ENCODE measurements at regions of chr5 and their contacts with region 1.

Region 1: DNA sequence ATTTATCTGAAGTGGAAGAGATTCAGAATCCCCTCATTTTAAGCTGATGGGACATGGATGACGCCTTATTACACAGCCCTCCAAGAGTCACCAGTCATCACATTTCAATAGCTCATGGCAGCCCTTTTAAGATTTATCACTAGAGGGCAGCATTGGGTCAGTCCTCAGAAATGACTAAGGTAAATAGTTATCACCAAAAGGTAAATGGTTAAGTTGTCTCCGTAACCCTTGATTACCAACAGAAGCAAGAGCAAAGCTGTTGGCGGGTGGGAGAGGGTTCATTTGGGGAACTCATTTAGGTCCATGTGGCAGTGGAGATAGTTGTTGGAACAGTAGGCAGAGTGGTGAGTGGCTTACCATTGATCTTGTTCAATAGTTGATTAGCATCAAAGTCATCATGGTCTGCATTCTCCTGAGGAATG is 12.0 kb upstream of the C9 start:
- DNase-seq: peak; percentile 72
- H3K4me3 ChIP-seq: no peak overlapping the region
- H3K27ac ChIP-seq: no peak overlapping the region
- H3K4me1 ChIP-seq: no peaks in the 10 kb centered on the region
- H3K27me3 ChIP-seq: no peaks in the 10 kb centered on the region
- CTCF ChIP-seq: peak; percentile 57 to 71
- POLR2A ChIP-seq: no peak

Region 2: GRCh38 chr5:38765399-38765861 is 610.9 kb before region 1 on chr5:
- CTCF ChIA-PET with region 1: no interaction called
- POLR2A ChIA-PET with region 1: no interaction called
- dilution Hi-C with region 1: no loop called
- intact Hi-C with region 1: no loop called
- DNase-seq: no peak
- H3K4me3 ChIP-seq: no peak overlapping the region
- H3K27ac ChIP-seq: no peak overlapping the region
- H3K4me1 ChIP-seq: no peaks in the 10 kb centered on the region
- H3K27me3 ChIP-seq: peaks cover 4 to 5% of the 10 kb centered on the region in 2 experiments
- CTCF ChIP-seq: no peak
- POLR2A ChIP-seq: no peak

Region 3: DNA sequence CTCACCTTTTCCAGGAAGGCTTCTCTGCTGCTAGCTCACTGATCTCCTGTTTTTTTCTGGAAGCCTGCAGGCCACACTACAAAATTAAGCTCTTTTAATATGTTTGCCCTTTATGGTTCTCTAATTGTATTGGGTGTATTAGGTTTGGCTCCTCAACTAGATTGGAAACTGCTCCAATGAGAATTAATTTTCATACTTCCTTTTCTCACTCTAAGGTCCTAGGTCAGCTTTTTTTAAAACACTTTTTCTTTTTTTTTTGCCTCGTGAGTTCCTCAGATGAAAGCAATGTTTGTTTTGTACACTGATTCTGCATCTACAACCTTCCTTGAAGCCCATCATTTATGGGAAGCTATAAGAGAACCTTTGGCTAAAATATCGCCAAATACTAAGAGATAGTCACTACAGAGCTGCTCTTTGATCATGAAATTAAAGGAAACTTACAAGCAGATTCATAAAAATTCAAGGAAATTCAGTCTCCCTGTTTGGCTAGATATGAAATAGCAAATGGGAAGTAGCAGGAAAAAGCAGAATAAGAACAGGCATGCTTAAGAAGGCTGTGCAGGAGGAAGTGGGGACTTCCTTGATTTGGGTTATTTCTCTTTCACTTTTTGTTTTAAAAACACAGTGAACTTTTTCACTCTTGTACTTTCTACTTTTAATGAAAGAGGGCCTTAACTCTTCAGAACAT is 101.8 kb before region 1 on chr5:
- CTCF ChIA-PET with region 1: no interaction called
- POLR2A ChIA-PET with region 1: no interaction called
- dilution Hi-C with region 1: no loop called
- intact Hi-C with region 1: no loop called
- DNase-seq: peak; percentile 67
- H3K4me3 ChIP-seq: peak overlapping the region in 2 of 3 experiments; percentile 13 to 57
- H3K27ac ChIP-seq: no peak overlapping the region
- H3K4me1 ChIP-seq: peaks cover 9% of the 10 kb centered on the region
- H3K27me3 ChIP-seq: no peaks in the 10 kb centered on the region
- CTCF ChIP-seq: no peak
- POLR2A ChIP-seq: no peak

Region 4: DNA sequence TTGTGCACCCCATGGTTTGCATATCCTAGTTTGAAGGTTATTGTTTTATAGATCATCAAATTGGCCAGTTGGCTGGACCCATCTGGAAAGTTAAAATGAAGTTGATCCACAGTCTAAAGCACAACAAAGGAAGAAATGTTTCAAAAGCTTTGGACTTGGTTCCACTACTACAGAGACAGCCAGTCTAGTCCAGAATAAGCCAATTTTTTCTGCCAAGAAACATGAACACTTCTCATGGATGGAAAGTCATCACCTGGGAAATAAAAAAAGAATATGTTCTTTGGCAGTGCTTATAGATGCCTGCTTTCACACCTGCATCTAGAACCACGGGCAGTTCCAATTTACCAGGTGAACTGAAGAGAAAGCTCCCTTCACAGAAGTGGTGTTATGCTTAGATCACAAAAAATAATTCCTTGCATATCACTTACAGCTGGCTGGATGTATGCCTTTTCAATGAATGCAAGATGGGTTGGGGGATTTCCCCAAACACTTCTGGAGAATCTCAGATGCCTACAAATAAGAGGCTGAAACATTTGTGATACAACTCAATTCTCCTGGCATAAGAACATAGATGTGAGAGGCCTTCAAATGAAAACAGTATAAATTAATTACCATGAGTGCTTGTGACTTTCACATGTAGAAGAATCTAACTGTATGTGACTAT is 38.9 kb before region 1 on chr5:
- CTCF ChIA-PET with region 1: no interaction called
- POLR2A ChIA-PET with region 1: no interaction called
- dilution Hi-C with region 1: no loop called
- intact Hi-C with region 1: no loop called
- DNase-seq: no peak
- H3K4me3 ChIP-seq: no peak overlapping the region
- H3K27ac ChIP-seq: no peak overlapping the region
- H3K4me1 ChIP-seq: no peaks in the 10 kb centered on the region
- H3K27me3 ChIP-seq: no peaks in the 10 kb centered on the region
- CTCF ChIP-seq: no peak
- POLR2A ChIP-seq: no peak

Region 5: DNA sequence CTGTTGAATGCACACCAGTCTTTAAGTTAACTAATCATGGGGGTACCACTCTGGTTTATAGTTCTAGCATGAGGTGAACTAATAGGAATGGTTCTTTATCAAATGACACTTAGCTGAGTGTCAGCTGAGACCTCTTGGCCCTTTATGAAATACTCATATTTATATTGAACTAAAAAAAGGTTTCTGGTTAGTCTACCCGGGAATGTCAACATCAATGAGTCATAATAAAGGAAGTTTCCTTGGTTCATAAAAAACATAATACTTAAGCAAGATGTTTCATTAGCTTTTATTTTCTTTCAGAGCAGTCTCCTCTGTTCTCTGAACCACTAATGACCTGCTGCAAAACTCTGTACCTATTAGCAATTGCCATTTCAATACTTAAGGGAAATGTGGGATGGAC is 34.7 kb after region 1 on chr5:
- CTCF ChIA-PET with region 1: interaction called, 11 read pairs
- POLR2A ChIA-PET with region 1: no interaction called
- dilution Hi-C with region 1: no loop called
- intact Hi-C with region 1: no loop called
- DNase-seq: peak; percentile 89
- H3K4me3 ChIP-seq: peak overlapping the region in 1 of 3 experiments; percentile 23
- H3K27ac ChIP-seq: peak overlapping the region; percentile 47
- H3K4me1 ChIP-seq: peaks cover 43% of the 10 kb centered on the region
- H3K27me3 ChIP-seq: no peaks in the 10 kb centered on the region
- CTCF ChIP-seq: no peak
- POLR2A ChIP-seq: no peak

Region 6: GRCh38 chr5:39501397-39501796 is 125.1 kb after region 1 on chr5:
- CTCF ChIA-PET with region 1: interaction called, 12 read pairs
- POLR2A ChIA-PET with region 1: no interaction called
- dilution Hi-C with region 1: no loop called
- intact Hi-C with region 1: no loop called
- DNase-seq: peak; percentile 83
- H3K4me3 ChIP-seq: no peak overlapping the region
- H3K27ac ChIP-seq: peak overlapping the region; percentile 64
- H3K4me1 ChIP-seq: peaks cover 26% of the 10 kb centered on the region
- H3K27me3 ChIP-seq: no peaks in the 10 kb centered on the region
- CTCF ChIP-seq: no peak
- POLR2A ChIP-seq: no peak

Region 7: GRCh38 chr5:39570403-39571027 is 194.2 kb after region 1 on chr5:
- CTCF ChIA-PET with region 1: interaction called, 153 read pairs
- POLR2A ChIA-PET with region 1: no interaction called
- dilution Hi-C with region 1: no loop called
- intact Hi-C with region 1: loop called (anchors 1 kb)
- DNase-seq: peak; percentile 61
- H3K4me3 ChIP-seq: no peak overlapping the region
- H3K27ac ChIP-seq: no peak overlapping the region
- H3K4me1 ChIP-seq: peaks cover 4% of the 10 kb centered on the region
- H3K27me3 ChIP-seq: no peaks in the 10 kb centered on the region
- CTCF ChIP-seq: peak; percentile 35 to 37
- POLR2A ChIP-seq: no peak